ENCODE measurements at regions of chr9 and their contacts with region 1.

Region 1: GRCh38 chr9:132901856-132902831 is 23.4 kb downstream of the SPACA9 start:
- DNase-seq: peak; percentile 77 to 82 (median 81)
- H3K4me3 ChIP-seq: no peak overlapping the region
- H3K4me3 Mint-ChIP-seq: no peak overlapping the region
- H3K27ac ChIP-seq: peak overlapping the region; percentile 12
- H3K27ac Mint-ChIP-seq: peak overlapping the region; percentile 3 to 87 (median 65)
- H3K4me1 ChIP-seq: no peaks in the 10 kb centered on the region
- H3K4me1 Mint-ChIP-seq: peaks cover 4 to 14% (median 7%) of the 10 kb centered on the region in 4 donors
- H3K27me3 ChIP-seq: no peaks in the 10 kb centered on the region
- H3K27me3 Mint-ChIP-seq: no peaks in the 10 kb centered on the region

Region 2: DNA sequence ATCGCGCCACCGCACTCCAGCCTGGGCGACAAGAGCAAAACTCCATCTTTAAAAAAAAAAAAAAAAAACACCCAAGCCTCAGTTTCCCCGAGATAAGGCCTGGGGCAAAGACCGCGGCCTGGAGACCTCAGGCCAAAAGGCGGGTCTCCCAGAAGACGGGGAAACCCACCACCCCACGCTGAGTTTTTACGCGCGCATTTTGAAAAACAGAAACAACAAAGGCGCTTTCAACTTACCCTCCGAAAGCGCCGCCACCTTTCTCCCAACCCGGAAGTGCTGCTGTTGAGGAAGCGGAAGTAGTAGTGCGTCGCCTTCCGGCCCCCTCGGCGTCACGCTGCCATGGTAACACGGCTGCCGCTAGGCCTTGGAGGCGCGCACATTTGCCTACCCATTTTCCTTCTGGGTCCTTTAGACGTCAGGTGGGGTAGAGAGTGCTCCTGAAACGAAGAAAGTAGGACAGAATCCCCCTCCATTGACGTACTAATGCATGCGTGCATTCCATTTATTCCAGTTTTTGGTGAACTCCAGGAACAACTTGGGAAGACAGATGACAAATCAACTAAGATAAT is 495.5 kb before region 1 on chr9 and contains the start of gene TTF1:
- CTCF ChIA-PET with region 1: interaction called, 3 read pairs
- POLR2A ChIA-PET with region 1: no interaction called
- intact Hi-C with region 1: loop called (anchors 10 kb)
- DNase-seq: peak; percentile 91 to 96 (median 94)
- H3K4me3 ChIP-seq: peak within 1 kb of the TSS; percentile 57 to 77
- H3K4me3 Mint-ChIP-seq: peak within 1 kb of the TSS; percentile 92 to 96 (median 94)
- H3K27ac ChIP-seq: peak within 1 kb of the TSS; percentile 59
- H3K27ac Mint-ChIP-seq: peak within 1 kb of the TSS; percentile 87 to 98 (median 95)
- H3K4me1 ChIP-seq: peaks cover 58% of the 10 kb centered on the region
- H3K4me1 Mint-ChIP-seq: peaks cover 35 to 73% (median 47%) of the 10 kb centered on the region in 4 donors
- H3K27me3 ChIP-seq: peaks cover 4% of the 10 kb centered on the region
- H3K27me3 Mint-ChIP-seq: peaks cover 3 to 11% of the 10 kb centered on the region in 2 donors
- total RNA-seq, gene TTF1: 22.2 TPM

Region 3: GRCh38 chr9:132877824-132878694 is 24.1 kb before region 1 on chr9 and contains the start of gene AK8:
- CTCF ChIA-PET with region 1: interaction called, 10 read pairs
- POLR2A ChIA-PET with region 1: no interaction called
- intact Hi-C with region 1: no loop called
- DNase-seq: peak; percentile 68 to 82 (median 79)
- H3K4me3 ChIP-seq: peak within 1 kb of the TSS; percentile 73 to 98
- H3K4me3 Mint-ChIP-seq: peak within 1 kb of the TSS; percentile 83 to 91 (median 85)
- H3K27ac ChIP-seq: peak within 1 kb of the TSS; percentile 70
- H3K27ac Mint-ChIP-seq: peak within 1 kb of the TSS; percentile 83 to 94 (median 86)
- H3K4me1 ChIP-seq: peaks cover 12% of the 10 kb centered on the region
- H3K4me1 Mint-ChIP-seq: peaks cover 8 to 17% (median 12%) of the 10 kb centered on the region in 4 donors
- H3K27me3 ChIP-seq: no peaks in the 10 kb centered on the region
- H3K27me3 Mint-ChIP-seq: peaks cover 0 to 1% of the 10 kb centered on the region in 2 donors
- total RNA-seq, gene AK8: 0.28 TPM in 1 of 2 experiments, not detected in the other

Region 4: DNA sequence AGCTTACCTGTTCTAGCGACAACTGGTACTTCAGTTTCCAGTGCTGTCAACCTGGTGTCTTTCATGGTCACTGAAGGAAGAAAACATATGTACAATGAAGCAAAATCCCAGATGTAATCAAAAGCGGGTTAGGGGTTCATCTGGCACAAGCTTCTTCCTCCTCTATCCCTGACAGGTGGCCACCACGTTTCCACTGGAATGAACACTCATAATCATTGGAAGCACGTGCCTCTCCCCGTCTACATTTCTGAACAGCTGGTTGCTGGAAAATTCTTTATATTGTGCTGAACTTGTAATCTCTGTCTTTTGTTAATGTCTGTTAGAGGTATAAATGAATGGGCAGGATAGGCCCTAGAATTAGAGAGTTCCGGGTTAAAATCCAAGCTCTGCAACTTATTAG is 32.9 kb after region 1 on chr9:
- CTCF ChIA-PET with region 1: interaction called, 10 read pairs
- POLR2A ChIA-PET with region 1: no interaction called
- intact Hi-C with region 1: no loop called
- DNase-seq: no peak
- H3K4me3 ChIP-seq: no peak overlapping the region
- H3K4me3 Mint-ChIP-seq: no peak overlapping the region
- H3K27ac ChIP-seq: no peak overlapping the region
- H3K27ac Mint-ChIP-seq: peak overlapping the region in 1 of 7 donors; percentile 35
- H3K4me1 ChIP-seq: no peaks in the 10 kb centered on the region
- H3K4me1 Mint-ChIP-seq: peaks cover 0 to 12% (median 4%) of the 10 kb centered on the region in 4 donors
- H3K27me3 ChIP-seq: no peaks in the 10 kb centered on the region
- H3K27me3 Mint-ChIP-seq: no peaks in the 10 kb centered on the region

Region 5: DNA sequence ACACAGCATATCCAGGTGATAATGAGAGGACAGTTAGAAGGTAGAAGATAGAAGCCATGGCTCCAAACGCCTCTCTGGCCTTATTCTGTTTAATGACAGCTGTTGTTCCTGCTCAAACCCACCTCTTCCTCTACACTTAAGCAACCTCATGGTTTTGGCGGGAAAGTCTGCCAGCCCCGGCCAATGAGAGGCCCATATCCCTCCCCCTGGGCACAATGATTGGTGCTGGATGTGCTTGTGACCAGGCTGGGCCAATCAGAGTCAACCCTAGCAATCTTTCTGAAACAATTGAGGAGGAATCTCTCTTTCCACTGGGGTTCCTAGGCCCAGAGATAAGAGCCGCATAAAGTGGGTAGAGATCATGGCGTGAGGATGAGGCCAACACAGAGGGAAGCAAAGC is 71.6 kb after region 1 on chr9:
- CTCF ChIA-PET with region 1: interaction called, 29 read pairs
- POLR2A ChIA-PET with region 1: no interaction called
- intact Hi-C with region 1: loop called (anchors 1 kb)
- DNase-seq: peak in 1 of 5 donors; percentile 9
- H3K4me3 ChIP-seq: no peak overlapping the region
- H3K4me3 Mint-ChIP-seq: no peak overlapping the region
- H3K27ac ChIP-seq: no peak overlapping the region
- H3K27ac Mint-ChIP-seq: no peak overlapping the region
- H3K4me1 ChIP-seq: peaks cover 10% of the 10 kb centered on the region
- H3K4me1 Mint-ChIP-seq: peaks cover 4 to 11% (median 6%) of the 10 kb centered on the region in 4 donors
- H3K27me3 ChIP-seq: peaks cover 4% of the 10 kb centered on the region
- H3K27me3 Mint-ChIP-seq: peaks cover 15 to 25% of the 10 kb centered on the region in 2 donors

Region 6: GRCh38 chr9:133492061-133493021 is 590.2 kb after region 1 on chr9:
- CTCF ChIA-PET with region 1: no interaction called
- POLR2A ChIA-PET with region 1: no interaction called
- intact Hi-C with region 1: no loop called
- DNase-seq: no peak
- H3K4me3 ChIP-seq: no peak overlapping the region
- H3K4me3 Mint-ChIP-seq: no peak overlapping the region
- H3K27ac ChIP-seq: no peak overlapping the region
- H3K27ac Mint-ChIP-seq: no peak overlapping the region
- H3K4me1 ChIP-seq: no peaks in the 10 kb centered on the region
- H3K4me1 Mint-ChIP-seq: no peaks in the 10 kb centered on the region
- H3K27me3 ChIP-seq: no peaks in the 10 kb centered on the region
- H3K27me3 Mint-ChIP-seq: peaks cover 5 to 8% of the 10 kb centered on the region in 2 donors

Measured in CD4-positive, alpha-beta memory T cell (primary cell).